Activated CD8-positive, alpha-beta T cell treated with anti-CD3 and anti-CD28 coated beads for 36 hours (primary cell): ENCODE measurements at regions of chr14 and their contacts with region 1.

Region 1: GRCh38 chr14:69153131-69153872 is 383 bp upstream of the DCAF5 start:
- DNase-seq: peak; percentile 95
- ATAC-seq: peak; percentile 91
- H3K4me3 Mint-ChIP-seq: peak overlapping the region; percentile 84
- H3K27ac Mint-ChIP-seq: peak overlapping the region; percentile 95
- H3K4me1 Mint-ChIP-seq: peaks cover 33% of the 10 kb centered on the region
- H3K27me3 Mint-ChIP-seq: peaks cover 2% of the 10 kb centered on the region
- CTCF ChIP-seq: no peak

Region 2: DNA sequence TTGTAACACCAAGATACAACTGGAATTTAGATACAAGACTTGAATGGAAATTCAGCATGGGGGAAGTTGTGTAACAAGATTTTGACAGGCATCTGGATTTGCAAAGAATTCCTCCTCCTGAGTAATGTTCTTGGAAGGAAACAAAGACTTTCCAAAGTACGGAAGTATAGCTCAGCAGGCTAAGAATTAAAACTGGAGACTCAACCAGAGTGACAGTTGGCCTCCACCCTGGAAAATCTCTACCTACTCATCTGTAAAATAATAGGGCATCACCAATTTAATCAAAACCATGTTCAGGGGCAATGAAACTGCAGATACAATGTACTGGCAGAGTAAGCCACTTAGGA is 15.1 kb before region 1 on chr14:
- CTCF ChIA-PET with region 1: interaction called, 218 read pairs
- POLR2A ChIA-PET with region 1: interaction called, 27 read pairs
- intact Hi-C with region 1: no loop called
- DNase-seq: no peak
- ATAC-seq: no peak
- H3K4me3 Mint-ChIP-seq: no peak overlapping the region
- H3K27ac Mint-ChIP-seq: peak overlapping the region; percentile 65
- H3K4me1 Mint-ChIP-seq: peaks cover 73% of the 10 kb centered on the region
- H3K27me3 Mint-ChIP-seq: no peaks in the 10 kb centered on the region
- CTCF ChIP-seq: no peak

Region 3: DNA sequence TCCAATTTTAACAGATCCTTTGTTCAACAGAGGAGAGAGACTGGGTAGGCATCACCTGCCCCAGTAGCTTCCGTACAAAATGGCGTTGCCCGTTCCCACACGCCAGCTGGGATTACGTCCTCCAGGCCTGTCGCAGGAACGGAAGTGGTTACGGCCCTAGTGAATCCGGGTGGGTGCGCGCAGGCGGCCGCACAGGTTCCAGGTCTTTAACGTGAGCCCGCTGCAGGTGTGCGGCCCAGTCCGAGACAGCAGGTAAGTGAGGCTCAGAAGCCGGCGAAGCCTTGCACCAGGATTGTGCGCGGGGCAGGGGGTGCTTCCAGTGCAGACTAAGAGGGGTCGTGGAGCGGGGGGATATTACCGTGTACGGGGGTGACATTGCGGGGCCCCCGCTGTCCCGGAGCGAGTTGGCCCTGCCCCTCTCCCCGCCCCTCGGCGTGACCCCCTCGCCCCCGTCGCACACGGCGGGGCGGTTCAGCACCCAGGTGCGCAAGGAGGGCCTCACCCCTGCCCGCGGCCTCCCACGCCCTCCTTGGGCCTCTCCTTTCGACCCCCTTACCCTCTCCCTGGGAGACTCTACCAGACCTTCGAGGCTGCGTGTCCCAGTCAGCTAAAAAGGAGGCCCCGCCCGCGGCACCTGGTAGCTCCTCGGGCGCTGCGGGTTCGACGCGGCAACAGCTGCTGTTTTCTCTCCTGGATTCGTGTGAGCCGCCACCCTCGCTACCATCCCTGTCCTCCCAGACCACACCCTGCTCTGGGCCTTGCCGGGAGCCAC is 38.2 kb after region 1 on chr14 and contains the start of gene EXD2:
- CTCF ChIA-PET with region 1: interaction called, 12 read pairs
- POLR2A ChIA-PET with region 1: interaction called, 5 read pairs
- intact Hi-C with region 1: no loop called
- DNase-seq: peak; percentile 89
- ATAC-seq: peak; percentile 88
- H3K4me3 Mint-ChIP-seq: peak within 1 kb of the TSS; percentile 90
- H3K27ac Mint-ChIP-seq: peak within 1 kb of the TSS; percentile 90
- H3K4me1 Mint-ChIP-seq: peaks cover 23% of the 10 kb centered on the region
- H3K27me3 Mint-ChIP-seq: no peaks in the 10 kb centered on the region
- CTCF ChIP-seq: no peak
- total RNA-seq, gene EXD2: 9.4 to 10.7 TPM